ENCODE measurements at regions of chr18 and their contacts with region 1.

Region 1: GRCh38 chr18:32470713-32471633 is at the start of gene GAREM1:
- DNase-seq: peak; percentile 98
- ATAC-seq: peak; percentile 95
- H3K4me3 ChIP-seq: peak within 1 kb of the TSS; percentile 88
- H3K27ac ChIP-seq: peak within 1 kb of the TSS; percentile 60
- H3K4me1 ChIP-seq: peaks cover 1% of the 10 kb centered on the region
- H3K27me3 ChIP-seq: peaks cover 5% of the 10 kb centered on the region
- CTCF ChIP-seq: peak; percentile 95
- POLR2A ChIP-seq: peak; percentile 70
- RAD21 ChIP-seq: peak; percentile 94
- total RNA-seq, gene GAREM1: 1.9 and 2.3 TPM in 2 replicates

Region 2: GRCh38 chr18:32271672-32272208 is 199.2 kb before region 1 on chr18:
- CTCF ChIA-PET with region 1: interaction called, 63 read pairs
- POLR2A ChIA-PET with region 1: interaction called, 3 read pairs
- dilution Hi-C with region 1: loop called (anchors 25 kb)
- in situ Hi-C with region 1: loop called (anchors 5 kb)
- intact Hi-C with region 1: loop called (anchors 1 kb)
- DNase-seq: peak; percentile 55
- ATAC-seq: peak; percentile 95
- H3K4me3 ChIP-seq: no peak overlapping the region
- H3K27ac ChIP-seq: no peak overlapping the region
- H3K4me1 ChIP-seq: no peaks in the 10 kb centered on the region
- H3K27me3 ChIP-seq: no peaks in the 10 kb centered on the region
- CTCF ChIP-seq: peak; percentile 92
- POLR2A ChIP-seq: no peak
- RAD21 ChIP-seq: peak; percentile 97

Region 3: DNA sequence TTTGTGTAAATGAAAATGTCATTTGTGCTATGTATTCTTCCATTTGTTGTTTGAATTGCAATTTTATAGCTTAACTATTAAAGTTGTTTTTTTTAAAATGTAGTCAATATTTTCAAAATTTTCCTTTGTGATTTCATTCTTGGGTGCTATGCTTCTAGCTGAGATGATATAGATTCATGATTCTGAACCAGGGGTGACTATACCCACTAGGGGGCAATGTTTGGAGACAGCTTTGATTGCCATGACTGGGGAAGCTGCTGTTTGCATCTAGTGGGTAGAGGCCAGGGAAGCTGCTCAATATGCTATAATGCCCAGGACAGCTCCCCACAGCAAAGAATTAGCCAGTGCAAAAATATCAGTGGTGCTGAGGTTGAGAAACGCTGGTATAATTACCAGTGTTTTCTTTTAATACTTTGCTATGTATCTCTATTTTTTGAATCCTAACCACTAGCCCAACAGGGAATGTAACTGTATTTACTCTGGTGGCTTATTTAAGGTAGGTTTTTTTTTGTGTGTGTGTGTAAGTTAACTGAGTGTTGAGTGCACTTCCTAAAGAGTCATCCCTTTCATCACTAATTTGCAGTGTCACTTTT is 181.4 kb before region 1 on chr18:
- CTCF ChIA-PET with region 1: interaction called, 39 read pairs
- POLR2A ChIA-PET with region 1: interaction called, 8 read pairs
- dilution Hi-C with region 1: loop called (anchors 25 kb)
- in situ Hi-C with region 1: no loop called
- intact Hi-C with region 1: loop called (anchors 1 kb)
- DNase-seq: peak; percentile 72
- ATAC-seq: peak; percentile 91
- H3K4me3 ChIP-seq: no peak overlapping the region
- H3K27ac ChIP-seq: no peak overlapping the region
- H3K4me1 ChIP-seq: no peaks in the 10 kb centered on the region
- H3K27me3 ChIP-seq: no peaks in the 10 kb centered on the region
- CTCF ChIP-seq: peak; percentile 76
- POLR2A ChIP-seq: no peak
- RAD21 ChIP-seq: peak; percentile 82

Region 4: DNA sequence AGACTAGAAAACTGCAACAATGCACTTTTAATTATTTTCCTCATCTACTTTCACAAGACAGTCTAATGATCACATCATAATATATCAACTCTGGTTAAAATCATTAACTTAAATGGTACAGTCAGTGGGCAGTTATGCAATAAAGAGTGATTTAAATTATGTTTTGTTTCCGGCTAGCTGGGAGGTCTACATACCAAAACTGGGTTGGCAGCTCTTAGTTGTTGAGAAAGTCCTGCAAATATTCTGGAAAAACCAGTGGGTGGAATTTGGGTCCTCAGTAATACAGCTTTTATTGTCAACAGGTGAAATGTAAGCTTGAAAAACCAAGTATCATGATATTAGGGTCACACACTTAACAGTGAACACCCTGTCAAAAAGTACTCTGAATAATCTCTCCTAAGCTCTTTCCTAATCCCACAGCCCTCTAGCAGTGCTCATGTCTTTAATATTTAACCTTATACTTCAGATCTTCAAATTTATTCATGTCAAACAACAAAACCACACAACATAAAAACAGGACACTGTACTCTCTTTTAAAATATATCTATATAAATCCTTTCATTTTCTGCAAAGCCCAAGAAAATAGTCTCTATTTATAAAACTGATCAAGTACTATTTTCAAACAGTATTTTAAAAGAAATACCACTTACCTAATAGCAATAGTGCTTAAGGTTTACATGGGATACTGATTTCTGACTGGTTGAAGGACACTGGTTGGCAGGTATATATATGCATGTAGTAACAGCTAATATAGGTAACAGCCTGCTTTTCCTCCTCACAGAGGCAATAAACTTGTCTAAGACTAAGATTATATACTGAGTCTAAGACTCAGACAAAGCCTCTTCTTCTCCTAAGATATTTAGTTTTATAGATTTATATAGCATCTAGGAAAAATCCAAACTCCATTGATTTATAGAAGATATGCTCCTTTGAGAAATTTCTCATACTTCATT is 104.1 kb before region 1 on chr18:
- CTCF ChIA-PET with region 1: no interaction called
- POLR2A ChIA-PET with region 1: no interaction called
- dilution Hi-C with region 1: no loop called
- in situ Hi-C with region 1: no loop called
- intact Hi-C with region 1: loop called (anchors 5 kb)
- DNase-seq: no peak
- ATAC-seq: peak; percentile 46
- H3K4me3 ChIP-seq: no peak overlapping the region
- H3K27ac ChIP-seq: no peak overlapping the region
- H3K4me1 ChIP-seq: peaks cover 4% of the 10 kb centered on the region; the same call in 1 of the 2 replicates
- H3K27me3 ChIP-seq: no peaks in the 10 kb centered on the region
- CTCF ChIP-seq: no peak
- POLR2A ChIP-seq: no peak
- RAD21 ChIP-seq: no peak

Region 5: DNA sequence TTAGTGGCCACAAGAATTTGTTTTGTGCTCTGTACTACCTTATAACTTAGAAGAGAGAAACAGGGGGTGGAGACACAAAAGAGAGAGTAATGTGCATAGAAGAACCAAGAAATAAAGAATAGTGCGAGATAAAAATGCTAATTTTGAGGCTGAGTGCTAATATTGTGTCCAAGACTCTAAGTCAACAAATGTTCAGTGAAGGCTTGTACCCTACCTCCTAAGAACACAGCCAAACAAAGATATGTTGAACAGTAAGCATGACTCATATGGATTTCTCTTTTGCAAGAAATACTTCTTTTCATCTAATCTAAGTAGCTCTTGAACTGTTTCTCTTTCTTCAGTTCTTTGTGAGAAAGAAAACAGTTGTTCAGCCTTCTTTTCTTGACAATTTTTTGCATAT is 45.5 kb before region 1 on chr18:
- CTCF ChIA-PET with region 1: interaction called, 3 read pairs
- POLR2A ChIA-PET with region 1: no interaction called
- dilution Hi-C with region 1: no loop called
- in situ Hi-C with region 1: no loop called
- intact Hi-C with region 1: loop called (anchors 2 kb)
- DNase-seq: peak; percentile 60
- ATAC-seq: peak; percentile 92
- H3K4me3 ChIP-seq: no peak overlapping the region
- H3K27ac ChIP-seq: no peak overlapping the region
- H3K4me1 ChIP-seq: no peaks in the 10 kb centered on the region; the same call in 1 of the 2 replicates
- H3K27me3 ChIP-seq: no peaks in the 10 kb centered on the region
- CTCF ChIP-seq: no peak
- POLR2A ChIP-seq: no peak
- RAD21 ChIP-seq: no peak

Region 6: DNA sequence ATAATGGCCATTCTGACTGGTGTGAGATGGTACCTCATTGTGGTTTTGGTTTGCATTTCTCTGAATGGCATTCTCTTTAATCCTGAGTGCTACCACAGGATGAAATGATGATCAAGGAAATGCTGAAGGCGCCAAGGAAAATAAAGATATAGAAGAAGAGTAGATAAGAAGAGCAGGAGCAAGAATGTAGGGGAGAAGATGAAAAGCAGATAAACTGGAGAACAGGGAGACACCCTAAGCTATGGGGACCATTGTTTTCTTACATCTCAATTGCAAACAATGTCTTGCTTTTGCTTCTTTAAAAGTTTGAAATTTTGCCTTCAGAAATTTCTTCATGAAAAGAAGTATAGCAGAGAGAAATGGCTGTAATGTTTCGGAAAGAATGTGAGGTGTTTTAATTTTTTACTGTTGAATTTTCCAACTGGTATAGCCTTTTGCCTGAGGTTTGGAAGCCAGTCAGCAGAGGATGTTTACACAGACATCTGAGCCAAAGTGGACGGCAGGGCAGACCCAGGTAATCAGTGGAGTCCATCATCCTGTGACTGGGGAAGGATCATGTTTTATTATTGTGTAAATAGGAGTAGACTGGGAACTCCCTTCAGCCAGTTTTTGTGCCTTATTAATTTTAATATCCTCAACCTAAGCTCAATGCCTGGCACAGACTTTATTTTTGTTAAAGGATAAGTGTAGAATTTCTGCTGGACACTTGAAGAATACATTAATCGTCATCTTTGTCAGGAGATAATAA is 141.5 kb after region 1 on chr18:
- CTCF ChIA-PET with region 1: no interaction called
- POLR2A ChIA-PET with region 1: no interaction called
- dilution Hi-C with region 1: no loop called
- in situ Hi-C with region 1: no loop called
- intact Hi-C with region 1: no loop called
- DNase-seq: no peak
- ATAC-seq: no peak
- H3K4me3 ChIP-seq: no peak overlapping the region
- H3K27ac ChIP-seq: no peak overlapping the region
- H3K4me1 ChIP-seq: no peaks in the 10 kb centered on the region
- H3K27me3 ChIP-seq: no peaks in the 10 kb centered on the region
- CTCF ChIP-seq: no peak
- POLR2A ChIP-seq: no peak
- RAD21 ChIP-seq: no peak

Measured in IMR-90 (cell line).